Heart left ventricle (tissue), 16 donors: ENCODE measurements at regions of chr1 and their contacts with region 1.

Region 1: GRCh38 chr1:61453111-61453961 is 271.6 kb downstream of the TM2D1 start:
- DNase-seq: peak; percentile 86 to 90 (median 88)
- ATAC-seq: peak; percentile 69 to 84 (median 81)
- H3K4me3 ChIP-seq: no peak overlapping the region
- H3K27ac ChIP-seq: peak overlapping the region; percentile 64 to 90 (median 78)
- H3K4me1 ChIP-seq: peaks cover 17 to 65% (median 61%) of the 10 kb centered on the region in 12 donors
- H3K27me3 ChIP-seq: no peaks in the 10 kb centered on the region
- CTCF ChIP-seq: peak; percentile 75 to 90 (median 80)
- POLR2A ChIP-seq: no peak

Region 2: DNA sequence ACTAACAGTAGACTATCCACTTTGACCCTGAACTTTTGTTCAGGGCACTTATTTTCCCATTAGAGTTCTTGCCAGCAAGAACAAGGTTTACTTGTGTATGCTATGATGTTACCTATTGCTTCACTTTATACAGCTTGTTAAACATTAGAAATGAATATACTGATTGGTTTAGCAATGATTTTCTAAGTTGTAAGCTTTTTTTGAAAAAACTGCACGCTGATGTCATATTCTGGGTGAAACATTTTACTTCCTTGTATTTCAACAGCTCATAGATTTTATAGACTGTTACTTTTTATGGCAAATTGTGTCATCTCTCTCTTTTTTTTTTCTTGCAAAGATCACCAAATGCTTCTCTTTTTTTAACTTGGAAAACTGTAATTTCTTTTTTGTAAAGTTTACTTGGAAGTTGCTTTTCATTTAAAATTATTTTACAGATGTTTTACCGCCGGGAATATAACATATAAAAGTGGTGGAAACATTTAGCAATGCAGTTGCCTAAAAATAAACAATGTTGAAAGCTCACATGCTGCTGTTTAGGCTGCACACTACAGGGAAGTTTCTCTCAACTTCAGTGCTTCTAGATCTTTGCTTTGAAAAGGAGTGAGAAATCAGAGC is 586.3 kb before region 1 on chr1:
- intact Hi-C with region 1: loop called in 1 of 10 experiments (anchors 10 kb)
- DNase-seq: no peak
- ATAC-seq: peak in 1 of 4 donors; percentile 50
- H3K4me3 ChIP-seq: peak overlapping the region in 4 of 12 donors; percentile 6 to 39 (median 36)
- H3K27ac ChIP-seq: peak overlapping the region in 3 of 12 donors; percentile 4 to 54 (median 43)
- H3K4me1 ChIP-seq: peaks cover 0 to 18% (median 9%) of the 10 kb centered on the region in 12 donors
- H3K27me3 ChIP-seq: no peaks in the 10 kb centered on the region
- CTCF ChIP-seq: no peak
- POLR2A ChIP-seq: no peak

Region 3: DNA sequence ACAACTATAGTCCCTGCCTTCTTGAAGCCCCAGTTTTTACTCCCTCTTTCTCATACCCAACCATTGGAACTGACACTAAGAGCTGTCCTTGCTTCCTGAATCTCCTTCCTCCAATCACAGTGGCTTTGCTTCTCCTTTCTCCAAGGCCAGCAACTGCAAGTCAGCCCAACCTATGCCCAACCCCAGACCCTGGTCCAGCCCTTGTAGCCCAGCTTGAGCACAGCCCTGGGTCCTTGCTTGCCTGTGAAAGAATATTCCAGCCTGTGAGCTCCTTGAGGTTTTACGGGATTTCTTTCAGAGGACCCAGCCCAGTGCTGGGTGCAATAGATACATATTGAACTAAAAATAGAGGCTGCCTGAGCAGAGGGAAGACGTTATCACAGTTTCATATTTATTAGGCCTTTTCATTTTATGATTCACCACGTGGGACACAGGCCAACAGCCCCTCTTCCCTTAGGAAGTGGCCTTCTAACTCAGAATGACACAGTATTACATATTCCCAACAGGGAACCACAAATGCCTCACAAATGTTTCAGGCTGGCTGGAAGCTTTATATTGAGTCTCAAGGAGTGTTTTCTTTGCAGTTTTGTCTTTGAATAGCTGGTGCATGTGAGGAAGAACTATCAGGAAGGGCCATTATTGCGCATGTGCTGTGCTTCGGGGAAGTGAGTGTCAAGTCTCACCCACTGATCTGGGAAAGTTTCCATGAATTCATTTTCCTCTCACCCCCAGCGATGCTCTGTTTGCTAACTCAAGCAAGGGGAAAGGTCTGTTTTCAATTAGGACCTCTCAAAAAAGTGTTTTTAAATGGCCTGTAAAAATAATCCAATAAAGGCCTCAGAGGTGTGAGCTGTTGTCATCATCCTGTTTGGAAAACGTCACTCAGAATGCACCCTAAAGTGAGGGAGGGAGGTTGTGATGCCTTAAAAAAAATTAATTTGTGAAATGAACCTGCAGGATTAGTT is 463.3 kb before region 1 on chr1:
- intact Hi-C with region 1: loop called in 1 of 10 experiments (anchors 5 kb)
- DNase-seq: peak in 4 of 5 donors; percentile 62 to 74 (median 72)
- ATAC-seq: peak; percentile 13 to 83 (median 76)
- H3K4me3 ChIP-seq: peak overlapping the region in 3 of 12 donors; percentile 3 to 17 (median 9)
- H3K27ac ChIP-seq: peak overlapping the region; percentile 22 to 87 (median 66)
- H3K4me1 ChIP-seq: peaks cover 0 to 37% (median 17%) of the 10 kb centered on the region in 12 donors
- H3K27me3 ChIP-seq: no peaks in the 10 kb centered on the region
- CTCF ChIP-seq: no peak
- POLR2A ChIP-seq: no peak

Region 4: DNA sequence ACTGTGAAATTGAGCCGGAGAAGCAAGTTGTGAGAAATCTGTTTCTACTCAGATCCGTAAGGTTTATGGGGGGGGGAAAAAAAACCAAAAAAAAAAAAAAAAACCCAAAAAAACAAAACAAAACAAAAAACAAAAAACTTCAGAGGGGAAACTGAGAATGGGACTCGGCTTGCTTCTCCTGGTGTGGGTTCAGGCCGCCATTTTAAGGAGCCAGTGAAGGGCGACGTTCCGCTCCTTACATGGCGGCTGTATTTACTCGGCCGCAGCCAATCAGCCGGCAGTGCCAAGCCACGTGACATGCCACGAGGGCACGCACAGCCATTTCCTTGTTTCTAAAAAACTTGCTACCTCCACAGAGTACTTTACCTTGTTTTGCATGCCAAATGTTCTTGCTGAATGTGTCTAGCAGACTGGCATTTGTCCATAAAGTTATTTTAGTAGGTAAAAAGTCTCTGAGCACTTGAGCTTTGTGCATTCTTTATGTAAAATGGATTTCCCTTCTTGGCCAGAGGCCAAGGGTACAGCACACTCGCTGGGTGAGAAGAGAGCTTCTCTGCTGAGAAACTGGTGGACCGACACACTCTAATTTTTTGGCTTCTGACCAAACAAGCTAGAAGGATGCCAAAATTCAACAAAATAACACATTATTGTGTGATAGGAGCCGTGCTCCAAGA is 269.2 kb before region 1 on chr1:
- intact Hi-C with region 1: loop called in 6 of 10 experiments (anchors 2 to 10 kb)
- DNase-seq: peak; percentile 92 to 96 (median 93)
- ATAC-seq: peak; percentile 92 to 96 (median 94)
- H3K4me3 ChIP-seq: peak overlapping the region in 11 of 12 donors; percentile 24 to 53 (median 42)
- H3K27ac ChIP-seq: peak overlapping the region; percentile 66 to 94 (median 88)
- H3K4me1 ChIP-seq: peaks cover 23 to 76% (median 58%) of the 10 kb centered on the region in 12 donors
- H3K27me3 ChIP-seq: no peaks in the 10 kb centered on the region
- CTCF ChIP-seq: no peak
- POLR2A ChIP-seq: no peak

Region 5: DNA sequence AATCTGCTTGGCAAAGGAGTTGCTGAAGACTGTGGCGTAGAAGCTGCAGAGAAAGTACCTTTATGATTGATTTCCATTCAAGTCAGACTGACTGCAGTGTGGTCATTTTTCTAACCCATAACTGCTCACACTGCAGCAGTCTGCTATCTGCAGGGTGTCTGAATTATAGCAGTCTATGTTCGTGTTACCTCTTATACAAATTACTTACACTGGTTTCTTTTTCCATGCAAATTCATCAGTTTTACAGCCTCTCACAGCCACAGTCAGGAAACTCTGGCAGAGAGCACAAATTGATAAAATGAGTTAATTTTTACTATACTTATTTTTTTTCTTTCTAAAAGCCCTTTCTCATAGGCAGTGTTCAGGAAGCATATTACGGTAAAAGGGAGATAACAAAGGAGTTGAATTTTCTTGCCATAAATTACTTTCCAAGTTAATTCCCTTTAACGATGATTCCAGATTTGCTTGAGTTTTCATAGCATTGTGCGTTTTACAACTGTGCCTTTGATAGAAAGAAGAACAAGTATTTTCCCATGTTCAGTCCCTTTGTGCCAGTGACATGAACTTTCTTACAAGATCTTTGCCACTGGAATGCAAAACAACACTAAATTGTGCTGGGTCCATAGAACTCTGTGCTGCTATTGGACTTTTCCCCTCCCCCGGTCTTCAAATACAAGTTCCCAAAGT is 109.5 kb before region 1 on chr1:
- intact Hi-C with region 1: loop called in 8 of 10 experiments (anchors 2 to 10 kb)
- DNase-seq: no peak
- ATAC-seq: peak in 1 of 4 donors; percentile 14
- H3K4me3 ChIP-seq: no peak overlapping the region
- H3K27ac ChIP-seq: peak overlapping the region in 7 of 12 donors; percentile 10 to 44 (median 25)
- H3K4me1 ChIP-seq: peaks cover 0 to 44% (median 20%) of the 10 kb centered on the region in 12 donors
- H3K27me3 ChIP-seq: no peaks in the 10 kb centered on the region
- CTCF ChIP-seq: no peak
- POLR2A ChIP-seq: no peak